Mammary epithelial cell (primary cell): ENCODE measurements at regions of chr4 and their contacts with region 1.

Region 1: DNA sequence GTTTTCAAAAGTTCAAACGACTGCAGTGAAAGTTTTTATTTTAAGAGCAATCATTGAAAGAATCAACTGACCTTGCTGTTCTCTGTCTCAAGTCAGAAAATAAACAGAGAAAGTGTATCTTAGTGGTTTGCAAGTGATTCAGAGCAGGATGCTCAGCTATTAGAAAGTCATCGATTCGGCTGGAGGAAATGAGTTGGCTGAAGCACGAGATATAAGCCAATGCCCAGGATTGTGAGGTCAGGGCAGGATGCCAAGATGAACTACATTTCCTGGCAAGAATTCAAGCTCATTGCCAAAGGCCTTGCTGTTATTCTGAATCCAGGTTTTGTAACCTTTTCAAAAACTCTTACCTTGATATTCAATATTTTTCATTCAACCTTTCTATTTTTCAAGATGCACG is 541.4 kb upstream of the BOD1L1 start:
- DNase-seq: peak; percentile 96
- H3K4me3 ChIP-seq: no peak overlapping the region
- H3K27ac ChIP-seq: peak overlapping the region; percentile 83
- H3K4me1 ChIP-seq: peaks cover 25% of the 10 kb centered on the region
- H3K27me3 ChIP-seq: no peaks in the 10 kb centered on the region
- CTCF ChIP-seq: no peak

Region 2: GRCh38 chr4:13705521-13706041 is 463.3 kb before region 1 on chr4:
- CTCF ChIA-PET with region 1: no interaction called
- dilution Hi-C with region 1: no loop called
- in situ Hi-C with region 1: no loop called
- intact Hi-C with region 1: loop called (anchors 5 kb)
- DNase-seq: peak; percentile 81
- H3K4me3 ChIP-seq: peak overlapping the region in 1 of 3 experiments; percentile 28
- H3K27ac ChIP-seq: peak overlapping the region; percentile 91
- H3K4me1 ChIP-seq: peaks cover 51% of the 10 kb centered on the region
- H3K27me3 ChIP-seq: no peaks in the 10 kb centered on the region
- CTCF ChIP-seq: no peak

Region 3: GRCh38 chr4:13907255-13907751 is 261.6 kb before region 1 on chr4:
- CTCF ChIA-PET with region 1: no interaction called
- dilution Hi-C with region 1: no loop called
- in situ Hi-C with region 1: no loop called
- intact Hi-C with region 1: loop called (anchors 2 kb)
- DNase-seq: peak; percentile 97
- H3K4me3 ChIP-seq: no peak overlapping the region
- H3K27ac ChIP-seq: peak overlapping the region; percentile 86
- H3K4me1 ChIP-seq: peaks cover 30% of the 10 kb centered on the region
- H3K27me3 ChIP-seq: no peaks in the 10 kb centered on the region
- CTCF ChIP-seq: peak; percentile 18 to 38

Region 4: GRCh38 chr4:13988353-13989305 is 180.3 kb before region 1 on chr4:
- CTCF ChIA-PET with region 1: no interaction called
- dilution Hi-C with region 1: no loop called
- in situ Hi-C with region 1: no loop called
- intact Hi-C with region 1: loop called (anchors 2 kb)
- DNase-seq: peak; percentile 94
- H3K4me3 ChIP-seq: no peak overlapping the region
- H3K27ac ChIP-seq: peak overlapping the region; percentile 79
- H3K4me1 ChIP-seq: peaks cover 36% of the 10 kb centered on the region
- H3K27me3 ChIP-seq: peaks cover 3% of the 10 kb centered on the region
- CTCF ChIP-seq: no peak

Region 5: DNA sequence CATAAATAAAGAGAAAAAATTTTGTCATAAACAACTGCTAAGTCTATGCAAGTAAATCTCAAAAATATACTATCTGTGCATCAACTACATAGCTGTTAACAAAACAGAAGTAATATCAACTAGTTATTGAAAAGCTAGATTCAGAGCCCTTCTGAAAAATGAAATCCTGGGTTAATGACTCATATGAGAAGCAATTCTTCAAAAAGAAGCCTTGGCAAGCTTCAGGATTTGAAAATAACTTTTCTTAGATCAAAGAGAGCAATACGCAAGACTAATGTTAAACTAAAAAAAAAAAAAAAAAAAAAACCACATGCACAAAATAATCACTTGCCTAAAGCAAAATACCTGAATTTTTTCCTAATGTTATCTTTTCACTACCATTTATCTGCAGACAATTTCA is 24.7 kb after region 1 on chr4:
- CTCF ChIA-PET with region 1: interaction called, 10 read pairs
- dilution Hi-C with region 1: no loop called
- in situ Hi-C with region 1: no loop called
- intact Hi-C with region 1: no loop called
- DNase-seq: peak; percentile 8
- H3K4me3 ChIP-seq: no peak overlapping the region
- H3K27ac ChIP-seq: no peak overlapping the region
- H3K4me1 ChIP-seq: no peaks in the 10 kb centered on the region
- H3K27me3 ChIP-seq: no peaks in the 10 kb centered on the region
- CTCF ChIP-seq: no peak

Region 6: GRCh38 chr4:14234307-14234706 is 65.4 kb after region 1 on chr4:
- CTCF ChIA-PET with region 1: no interaction called
- dilution Hi-C with region 1: no loop called
- in situ Hi-C with region 1: no loop called
- intact Hi-C with region 1: loop called (anchors 2 kb)
- DNase-seq: peak; percentile 82
- H3K4me3 ChIP-seq: no peak overlapping the region
- H3K27ac ChIP-seq: peak overlapping the region; percentile 16
- H3K4me1 ChIP-seq: peaks cover 14% of the 10 kb centered on the region
- H3K27me3 ChIP-seq: no peaks in the 10 kb centered on the region
- CTCF ChIP-seq: no peak

Region 7: DNA sequence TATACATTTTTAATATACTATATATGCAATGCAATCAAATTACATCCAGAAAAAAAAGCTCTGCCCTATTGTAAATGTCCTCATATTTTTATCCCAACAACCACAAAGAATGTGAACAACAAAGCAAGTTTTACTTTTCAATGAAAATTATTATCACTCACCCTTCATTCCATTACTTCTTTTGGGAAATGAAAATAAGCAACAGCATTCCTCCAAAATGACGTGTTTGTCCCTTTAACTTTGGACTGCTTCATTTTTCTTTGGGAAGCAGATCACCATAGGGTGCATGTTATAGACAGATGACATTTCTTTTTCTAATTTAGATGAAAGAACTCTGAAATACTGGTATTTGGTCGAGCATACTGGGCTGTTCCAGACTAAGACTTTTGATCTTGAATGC is 125.7 kb after region 1 on chr4:
- CTCF ChIA-PET with region 1: no interaction called
- dilution Hi-C with region 1: no loop called
- in situ Hi-C with region 1: no loop called
- intact Hi-C with region 1: loop called (anchors 1 kb)
- DNase-seq: no peak
- H3K4me3 ChIP-seq: no peak overlapping the region
- H3K27ac ChIP-seq: no peak overlapping the region
- H3K4me1 ChIP-seq: peaks cover 6% of the 10 kb centered on the region
- H3K27me3 ChIP-seq: no peaks in the 10 kb centered on the region
- CTCF ChIP-seq: no peak

Region 8: DNA sequence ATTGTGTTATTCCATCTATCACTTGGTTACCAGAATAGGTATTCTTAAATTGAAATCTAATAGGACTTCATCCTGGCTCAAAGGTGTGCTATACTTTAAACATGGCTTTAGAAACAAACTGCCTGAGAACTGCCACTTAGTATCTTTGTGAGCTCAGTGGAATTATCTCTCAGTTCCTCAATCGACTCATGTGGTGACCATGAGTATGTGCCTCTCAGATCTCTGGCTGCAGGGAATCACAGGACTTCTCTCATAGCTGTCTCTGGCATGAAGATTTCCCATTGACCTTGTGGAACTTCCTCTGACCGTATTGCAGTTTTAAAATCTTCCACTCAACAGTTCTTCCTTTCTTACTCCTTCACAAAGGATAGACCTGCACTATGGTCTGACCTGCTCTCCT is 140.5 kb after region 1 on chr4:
- CTCF ChIA-PET with region 1: no interaction called
- dilution Hi-C with region 1: no loop called
- in situ Hi-C with region 1: no loop called
- intact Hi-C with region 1: no loop called
- DNase-seq: no peak
- H3K4me3 ChIP-seq: no peak overlapping the region
- H3K27ac ChIP-seq: no peak overlapping the region
- H3K4me1 ChIP-seq: peaks cover 14% of the 10 kb centered on the region
- H3K27me3 ChIP-seq: no peaks in the 10 kb centered on the region
- CTCF ChIP-seq: no peak